H1 (cell line): ENCODE measurements at regions of chr20 and their contacts with region 1.

Region 1: GRCh38 chr20:38221119-38221589 is 39.4 kb downstream of the KIAA1755 start:
- DNase-seq: peak; percentile 41 to 99
- H3K4me3 ChIP-seq: no peak overlapping the region
- H3K27ac ChIP-seq: no peak overlapping the region
- H3K4me1 ChIP-seq: peaks cover 0 to 3% (median 0%) of the 10 kb centered on the region in 4 experiments; a peak in 3 of 7 replicates
- H3K27me3 ChIP-seq: no peaks in the 10 kb centered on the region
- CTCF ChIP-seq: peak; percentile 93 to 98 (median 98)
- EP300 ChIP-seq: peak in 1 of 2 experiments; percentile 35; a peak in 1 of 3 replicates
- POLR2A ChIP-seq: no peak
- RAD21 ChIP-seq: peak; percentile 97 to 98

Region 2: GRCh38 chr20:38084400-38084951 is 136.7 kb before region 1 on chr20:
- CTCF ChIA-PET with region 1: interaction called, 15 read pairs
- POLR2A ChIA-PET with region 1: no interaction called
- DNase-seq: no peak
- H3K4me3 ChIP-seq: no peak overlapping the region
- H3K27ac ChIP-seq: no peak overlapping the region
- H3K4me1 ChIP-seq: no peaks in the 10 kb centered on the region
- H3K27me3 ChIP-seq: no peaks in the 10 kb centered on the region
- CTCF ChIP-seq: no peak
- EP300 ChIP-seq: no peak
- POLR2A ChIP-seq: no peak
- RAD21 ChIP-seq: no peak

Region 3: GRCh38 chr20:38113401-38114325 is 107.5 kb before region 1 on chr20:
- CTCF ChIA-PET with region 1: interaction called, 198 read pairs
- POLR2A ChIA-PET with region 1: no interaction called
- DNase-seq: peak; percentile 38 to 79
- H3K4me3 ChIP-seq: no peak overlapping the region
- H3K27ac ChIP-seq: no peak overlapping the region
- H3K4me1 ChIP-seq: no peaks in the 10 kb centered on the region
- H3K27me3 ChIP-seq: no peaks in the 10 kb centered on the region
- CTCF ChIP-seq: peak; percentile 66 to 75 (median 74)
- EP300 ChIP-seq: no peak
- POLR2A ChIP-seq: no peak
- RAD21 ChIP-seq: peak; percentile 67 to 79

Region 4: GRCh38 chr20:38165089-38165989 is 55.8 kb before region 1 on chr20 and contains the start of gene TGM2:
- CTCF ChIA-PET with region 1: interaction called, 14 read pairs
- POLR2A ChIA-PET with region 1: no interaction called
- DNase-seq: peak in 1 of 2 experiments; percentile 79
- H3K4me3 ChIP-seq: peak within 1 kb of the TSS; percentile 15 to 58 (median 16); a peak in 5 of 8 replicates
- H3K27ac ChIP-seq: no peak within 1 kb of the TSS
- H3K4me1 ChIP-seq: peaks cover 0 to 2% (median 0%) of the 10 kb centered on the region in 4 experiments; a peak in 1 of 7 replicates
- H3K27me3 ChIP-seq: no peaks in the 10 kb centered on the region; a peak in 2 of 7 replicates
- CTCF ChIP-seq: peak; percentile 73 to 83 (median 82)
- EP300 ChIP-seq: no peak
- POLR2A ChIP-seq: no peak
- RAD21 ChIP-seq: peak; percentile 71 to 79
- total RNA-seq, gene TGM2: 1.0 and 1.3 TPM in 2 replicates

Region 5: DNA sequence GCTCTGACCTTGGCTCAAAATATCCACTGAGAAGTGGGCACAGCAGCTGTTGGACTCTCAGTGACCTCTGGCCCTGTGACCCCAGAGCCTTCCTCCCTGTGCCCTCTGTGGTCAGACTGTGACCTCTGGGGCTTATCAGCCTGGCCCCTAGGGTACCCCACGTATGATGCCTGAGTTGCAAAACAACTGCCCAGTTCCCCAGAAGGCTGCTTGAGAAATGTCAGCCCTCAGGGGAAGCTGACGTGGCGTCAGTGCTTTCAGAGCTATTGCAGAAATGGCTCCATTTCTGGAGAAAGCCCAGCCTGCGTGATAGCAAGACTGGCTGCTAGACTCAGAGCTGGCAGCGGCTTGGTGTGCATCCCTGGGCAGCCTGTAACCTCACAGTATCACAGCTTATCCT is 24.6 kb before region 1 on chr20:
- CTCF ChIA-PET with region 1: interaction called, 64 read pairs
- POLR2A ChIA-PET with region 1: no interaction called
- DNase-seq: no peak
- H3K4me3 ChIP-seq: no peak overlapping the region
- H3K27ac ChIP-seq: no peak overlapping the region
- H3K4me1 ChIP-seq: no peaks in the 10 kb centered on the region
- H3K27me3 ChIP-seq: no peaks in the 10 kb centered on the region
- CTCF ChIP-seq: no peak
- EP300 ChIP-seq: no peak
- POLR2A ChIP-seq: no peak
- RAD21 ChIP-seq: no peak

Region 6: DNA sequence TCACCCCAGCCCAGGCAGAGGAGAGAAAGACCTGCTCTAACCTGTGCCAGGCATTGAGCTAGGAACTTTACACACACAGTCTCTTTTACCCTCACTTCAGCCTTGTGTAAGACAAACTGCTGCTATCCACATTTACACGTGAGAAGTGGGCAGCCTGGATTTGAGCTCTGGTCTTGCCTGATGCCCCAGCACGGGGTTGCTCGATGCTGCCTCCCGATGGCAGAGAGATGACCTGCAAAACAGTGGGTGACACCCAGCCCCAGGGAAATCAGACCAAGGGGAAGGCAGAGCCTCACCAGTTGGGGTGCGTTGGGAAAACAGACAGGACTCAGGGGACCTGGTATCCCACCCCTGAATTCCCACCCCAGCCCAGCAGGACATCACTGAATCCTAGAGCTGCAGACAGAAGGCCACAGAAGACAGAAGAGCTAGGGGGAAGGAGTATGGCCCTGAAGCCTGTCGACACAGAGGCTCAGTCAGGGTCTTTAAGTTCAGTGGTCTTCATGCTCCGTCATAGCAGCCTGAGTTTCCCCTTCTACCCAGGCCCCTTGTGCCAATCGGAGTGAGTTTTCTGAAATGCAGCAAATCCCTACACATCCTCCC is 83.8 kb after region 1 on chr20:
- CTCF ChIA-PET with region 1: interaction called, 12 read pairs
- POLR2A ChIA-PET with region 1: no interaction called
- DNase-seq: peak; percentile 10 to 90
- H3K4me3 ChIP-seq: no peak overlapping the region
- H3K27ac ChIP-seq: no peak overlapping the region
- H3K4me1 ChIP-seq: peaks cover 0 to 4% (median 2%) of the 10 kb centered on the region in 4 experiments; a peak in 3 of 7 replicates
- H3K27me3 ChIP-seq: no peaks in the 10 kb centered on the region; a peak in 1 of 7 replicates
- CTCF ChIP-seq: peak; percentile 78 to 86 (median 82)
- EP300 ChIP-seq: no peak
- POLR2A ChIP-seq: no peak
- RAD21 ChIP-seq: peak; percentile 61 to 71

Region 7: DNA sequence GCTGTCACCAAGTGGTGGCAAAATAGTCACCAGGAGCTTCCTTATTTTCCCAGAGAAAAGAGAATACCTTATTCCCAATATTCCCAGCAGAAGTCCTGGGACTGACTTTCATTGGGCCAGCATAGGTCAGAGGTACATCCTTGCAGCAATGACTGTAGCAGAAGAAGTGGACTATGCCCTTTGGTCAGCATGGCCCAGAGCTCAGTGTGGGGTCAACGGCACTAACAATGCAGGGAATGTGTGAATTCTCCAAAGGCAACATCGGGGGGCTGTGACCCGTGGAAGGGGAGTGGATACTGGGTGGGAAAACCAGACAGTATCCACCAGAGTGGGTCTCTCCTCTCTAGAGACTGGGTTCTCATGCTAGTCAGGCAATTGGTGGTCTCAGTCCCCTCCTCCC is 109.5 kb after region 1 on chr20:
- CTCF ChIA-PET with region 1: no interaction called
- POLR2A ChIA-PET with region 1: no interaction called
- DNase-seq: no peak
- H3K4me3 ChIP-seq: no peak overlapping the region
- H3K27ac ChIP-seq: no peak overlapping the region
- H3K4me1 ChIP-seq: no peaks in the 10 kb centered on the region
- H3K27me3 ChIP-seq: no peaks in the 10 kb centered on the region
- CTCF ChIP-seq: no peak
- EP300 ChIP-seq: no peak
- POLR2A ChIP-seq: no peak
- RAD21 ChIP-seq: no peak

Region 8: GRCh38 chr20:38357653-38358207 is 136.6 kb after region 1 on chr20:
- CTCF ChIA-PET with region 1: no interaction called
- POLR2A ChIA-PET with region 1: no interaction called
- DNase-seq: no peak
- H3K4me3 ChIP-seq: no peak overlapping the region
- H3K27ac ChIP-seq: no peak overlapping the region
- H3K4me1 ChIP-seq: peaks cover 2 to 23% (median 14%) of the 10 kb centered on the region in 4 experiments
- H3K27me3 ChIP-seq: no peaks in the 10 kb centered on the region
- CTCF ChIP-seq: no peak
- EP300 ChIP-seq: no peak
- POLR2A ChIP-seq: no peak
- RAD21 ChIP-seq: no peak